Esophagus muscularis mucosa (tissue), 4 donors: ENCODE measurements at regions of chr1 and their contacts with region 1.

Region 1: GRCh38 chr1:9196129-9197040 is 38.2 kb upstream of the H6PD start:
- DNase-seq: no peak
- H3K4me3 ChIP-seq: peak overlapping the region in 2 of 4 donors; percentile 19 to 27
- H3K27ac ChIP-seq: peak overlapping the region; percentile 17 to 42 (median 26)
- H3K4me1 ChIP-seq: peaks cover 26 to 38% (median 37%) of the 10 kb centered on the region in 4 donors
- H3K27me3 ChIP-seq: peaks cover 0 to 49% (median 12%) of the 10 kb centered on the region in 4 donors
- CTCF ChIP-seq: peak; percentile 78 to 90 (median 88)
- EP300 ChIP-seq: no peak
- POLR2A ChIP-seq: no peak

Region 2: GRCh38 chr1:8651236-8651890 is 545.0 kb before region 1 on chr1:
- intact Hi-C with region 1: no loop called
- DNase-seq: no peak
- H3K4me3 ChIP-seq: no peak overlapping the region
- H3K27ac ChIP-seq: peak overlapping the region in 2 of 4 donors; percentile 6 to 55
- H3K4me1 ChIP-seq: peaks cover 33 to 53% (median 47%) of the 10 kb centered on the region in 4 donors
- H3K27me3 ChIP-seq: no peaks in the 10 kb centered on the region
- CTCF ChIP-seq: no peak
- EP300 ChIP-seq: no peak
- POLR2A ChIP-seq: no peak

Region 3: DNA sequence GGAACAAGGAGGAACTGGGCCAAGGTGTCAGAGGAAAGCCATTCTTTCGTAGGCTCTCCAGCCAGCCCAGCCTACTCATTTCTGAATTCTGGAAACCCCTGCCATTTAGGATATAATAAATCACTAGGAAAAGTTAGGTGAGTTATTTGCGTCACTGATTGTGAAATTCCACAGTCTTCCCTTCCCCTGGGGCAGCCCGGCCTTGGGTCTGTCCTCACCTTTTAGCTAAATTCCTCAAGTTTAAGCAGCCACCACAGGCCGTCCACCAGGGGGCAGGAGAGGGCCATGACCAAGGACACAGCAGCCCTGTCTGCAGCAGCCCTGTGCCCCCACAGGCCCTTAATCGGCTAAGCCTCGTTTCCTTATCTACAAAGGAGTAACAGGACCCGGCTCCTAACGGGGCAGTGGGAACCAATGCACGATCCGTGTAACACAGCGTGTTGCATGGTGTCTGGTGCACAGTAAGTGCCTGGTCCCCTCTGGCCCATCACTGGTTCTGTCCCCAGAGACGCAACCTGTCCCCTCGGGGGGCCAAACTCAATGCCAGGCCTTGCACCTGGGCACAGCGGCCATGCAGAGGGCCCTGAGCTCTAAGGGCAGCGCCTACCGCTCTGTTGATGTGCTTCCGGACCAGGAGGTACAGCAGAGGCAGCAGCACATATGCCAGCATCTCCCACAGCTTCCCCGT is 85.6 kb before region 1 on chr1:
- intact Hi-C with region 1: loop called (anchors 2 kb)
- DNase-seq: peak; percentile 97
- H3K4me3 ChIP-seq: no peak overlapping the region
- H3K27ac ChIP-seq: no peak overlapping the region
- H3K4me1 ChIP-seq: peaks cover 9 to 24% (median 17%) of the 10 kb centered on the region in 4 donors
- H3K27me3 ChIP-seq: no peaks in the 10 kb centered on the region
- CTCF ChIP-seq: peak; percentile 89 to 95 (median 91)
- EP300 ChIP-seq: no peak
- POLR2A ChIP-seq: no peak